ENCODE measurements at regions of chr10 and their contacts with region 1.

Region 1: DNA sequence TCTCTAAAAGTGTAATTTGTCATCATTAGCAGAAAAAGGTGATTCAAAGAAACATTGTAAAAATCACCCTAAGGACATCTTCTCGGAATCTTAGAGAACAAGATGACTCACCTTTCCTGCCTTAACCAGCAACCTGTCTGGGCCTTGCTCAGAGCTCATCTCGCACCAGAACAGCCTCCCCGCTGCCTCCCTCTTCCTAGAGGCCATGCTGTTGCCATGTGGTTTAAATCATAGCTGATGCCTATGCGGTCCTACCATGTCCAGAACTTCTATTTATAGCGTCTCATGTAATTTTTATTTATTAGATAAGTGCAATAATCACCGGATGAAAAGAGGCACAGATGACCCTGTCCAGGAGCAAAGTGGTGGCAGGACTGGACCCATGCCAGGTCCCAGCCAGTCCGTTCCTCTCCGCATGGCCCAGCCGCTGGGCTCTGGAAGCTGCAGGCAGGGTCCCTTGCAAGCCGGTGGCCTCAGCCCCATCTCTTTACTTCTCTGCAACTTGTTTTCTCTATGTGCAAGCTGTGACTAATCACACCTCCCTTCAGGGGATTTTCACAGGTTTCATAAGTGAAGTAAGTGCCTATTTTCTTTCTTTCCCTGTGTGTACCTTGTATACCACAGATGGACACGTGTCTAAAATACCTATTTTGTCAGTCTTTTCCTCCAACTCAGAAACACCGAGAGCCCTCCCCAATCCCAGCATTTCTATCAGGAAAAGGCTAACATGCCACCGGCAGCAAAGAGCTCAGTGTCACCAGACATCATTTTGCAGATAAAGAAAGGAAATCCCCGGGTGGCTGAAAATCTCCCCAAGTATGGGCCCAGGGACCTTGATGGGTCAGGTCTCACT is 27.1 kb downstream of the KLF6 start:
- DNase-seq: no peak
- ATAC-seq: peak in 1 of 2 donors; percentile 32

Region 2: GRCh38 chr10:3248888-3249758 is 508.7 kb before region 1 on chr10:
- intact Hi-C with region 1: loop called in 1 of 2 experiments (anchors 10 kb)
- DNase-seq: no peak
- ATAC-seq: peak; percentile 47 to 98

Region 3: DNA sequence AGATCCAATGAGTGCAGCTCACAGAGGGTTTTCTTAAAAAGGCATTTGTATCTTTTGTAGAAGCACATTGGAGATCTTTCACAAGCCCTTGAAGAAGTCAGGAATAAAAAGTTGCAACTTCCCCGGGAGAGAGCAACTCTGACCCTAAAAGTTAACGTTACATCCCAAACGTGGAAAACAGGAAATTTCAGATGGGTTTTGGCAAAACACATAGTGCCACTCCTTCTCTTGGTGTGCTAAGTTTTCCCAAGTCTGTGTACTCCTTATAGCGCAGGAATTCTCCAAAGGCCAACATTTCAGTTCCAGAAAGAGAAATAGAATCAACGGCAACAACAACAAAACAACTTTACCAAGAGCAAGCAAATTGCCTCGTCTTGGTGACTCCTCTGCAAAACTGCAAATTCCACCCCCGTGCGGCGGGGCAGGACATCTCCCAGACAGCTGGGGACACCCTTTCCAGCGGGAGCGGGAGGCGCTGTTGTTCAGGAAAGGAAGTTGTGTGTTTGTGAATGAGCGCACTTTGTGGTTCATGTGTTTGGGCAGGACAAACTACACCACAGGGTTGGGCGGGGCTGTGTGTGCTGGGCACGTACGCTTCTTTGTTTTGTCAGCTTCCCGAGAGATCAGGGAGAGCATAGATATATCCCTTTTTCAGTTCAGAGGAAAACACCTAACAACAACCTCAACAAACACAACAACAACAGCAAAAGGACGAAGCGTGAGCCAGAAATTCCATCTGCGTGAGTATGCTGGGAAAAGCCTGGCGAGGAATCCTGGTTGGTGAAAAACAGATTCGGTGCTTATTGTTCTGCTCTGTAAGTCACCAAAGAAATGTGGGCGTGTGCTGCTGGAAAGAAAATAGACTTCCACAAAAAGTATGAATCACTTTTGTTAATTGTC is 290.6 kb before region 1 on chr10:
- intact Hi-C with region 1: loop called in 1 of 2 experiments (anchors 10 kb)
- DNase-seq: peak; percentile 82
- ATAC-seq: peak; percentile 28 to 76

Region 4: DNA sequence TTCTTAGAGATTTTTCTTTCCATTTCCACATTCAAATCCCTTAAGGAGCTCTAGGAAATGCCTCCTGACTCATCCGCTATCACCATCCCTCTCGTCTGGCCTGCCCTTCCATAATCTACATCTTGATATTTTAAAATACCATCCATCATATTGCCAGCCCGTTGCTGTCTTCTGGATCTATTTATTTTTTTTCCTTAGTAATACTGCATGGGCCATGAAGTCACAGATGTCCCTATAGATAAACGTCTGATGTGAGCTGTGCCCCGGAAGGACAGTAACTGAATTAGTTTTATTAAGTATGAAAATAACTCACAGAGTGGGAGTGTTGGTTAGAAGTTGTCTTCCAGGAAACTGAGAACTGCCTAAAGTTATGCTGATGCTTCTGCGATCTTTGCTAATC is 49.0 kb before region 1 on chr10:
- intact Hi-C with region 1: no loop called
- DNase-seq: no peak
- ATAC-seq: peak in 1 of 2 donors; percentile 66

Measured in left cardiac atrium (tissue), 4 donors.